ENCODE measurements at regions of chr2 and their contacts with region 1.

Region 1: GRCh38 chr2:218269899-218270720 is at the starts of genes AAMP and PNKD:
- DNase-seq: peak; percentile 100
- H3K4me3 ChIP-seq: peak within 1 kb of the TSS; percentile 91
- H3K27ac ChIP-seq: peak within 1 kb of the TSS; percentile 74
- H3K4me1 ChIP-seq: peaks cover 20% of the 10 kb centered on the region
- H3K27me3 ChIP-seq: no peaks in the 10 kb centered on the region
- CTCF ChIP-seq: 0 out of 2 replicates have a peak, but pooled peaks have one; percentile 18
- total RNA-seq, gene AAMP: 74.7 and 78.8 TPM in 2 replicates
- total RNA-seq, gene PNKD: 36.7 and 44.9 TPM in 2 replicates

Region 2: DNA sequence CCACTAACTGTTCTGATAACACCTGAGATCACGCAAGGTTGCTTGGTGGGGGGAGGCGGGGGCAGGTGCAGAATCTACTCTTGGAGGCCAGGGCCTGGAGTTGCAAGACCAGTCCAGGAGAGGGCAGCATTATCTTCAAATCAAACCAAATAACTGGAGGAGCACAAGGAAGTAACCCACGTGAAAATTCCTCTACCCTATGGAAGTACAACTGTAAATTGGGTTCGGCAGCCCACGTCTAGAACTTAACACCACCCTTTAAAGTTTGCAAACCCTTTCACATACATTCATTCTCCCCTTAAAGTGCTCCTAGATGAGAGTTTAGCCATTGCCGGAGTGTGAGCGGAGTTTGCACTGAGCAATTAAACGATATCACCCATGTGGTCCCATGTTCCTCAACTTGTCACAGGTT is 83.7 kb before region 1 on chr2:
- CTCF ChIA-PET with region 1: no interaction called
- POLR2A ChIA-PET with region 1: no interaction called
- intact Hi-C with region 1: loop called (anchors 5 kb)
- DNase-seq: peak; percentile 81
- H3K4me3 ChIP-seq: no peak overlapping the region
- H3K27ac ChIP-seq: no peak overlapping the region
- H3K4me1 ChIP-seq: no peaks in the 10 kb centered on the region
- H3K27me3 ChIP-seq: no peaks in the 10 kb centered on the region
- CTCF ChIP-seq: peak; percentile 87

Region 3: GRCh38 chr2:218360447-218360846 is 90.3 kb after region 1 on chr2:
- CTCF ChIA-PET with region 1: interaction called, 3 read pairs
- POLR2A ChIA-PET with region 1: no interaction called
- intact Hi-C with region 1: loop called (anchors 1 kb)
- DNase-seq: no peak
- H3K4me3 ChIP-seq: no peak overlapping the region
- H3K27ac ChIP-seq: no peak overlapping the region
- H3K4me1 ChIP-seq: no peaks in the 10 kb centered on the region
- H3K27me3 ChIP-seq: no peaks in the 10 kb centered on the region
- CTCF ChIP-seq: no peak

Region 4: GRCh38 chr2:218395797-218396687 is 125.9 kb after region 1 on chr2:
- CTCF ChIA-PET with region 1: interaction called, 4 read pairs
- POLR2A ChIA-PET with region 1: no interaction called
- intact Hi-C with region 1: loop called (anchors 2 kb)
- DNase-seq: peak; percentile 98
- H3K4me3 ChIP-seq: peak overlapping the region; percentile 97
- H3K27ac ChIP-seq: peak overlapping the region; percentile 91
- H3K4me1 ChIP-seq: peaks cover 37% of the 10 kb centered on the region
- H3K27me3 ChIP-seq: no peaks in the 10 kb centered on the region
- CTCF ChIP-seq: peak; percentile 87

Region 5: GRCh38 chr2:218471982-218472381 is 201.9 kb after region 1 on chr2:
- CTCF ChIA-PET with region 1: no interaction called
- POLR2A ChIA-PET with region 1: no interaction called
- intact Hi-C with region 1: no loop called
- DNase-seq: no peak
- H3K4me3 ChIP-seq: no peak overlapping the region
- H3K27ac ChIP-seq: no peak overlapping the region
- H3K4me1 ChIP-seq: no peaks in the 10 kb centered on the region
- H3K27me3 ChIP-seq: no peaks in the 10 kb centered on the region
- CTCF ChIP-seq: no peak

Region 6: GRCh38 chr2:218648088-218648786 is 378.1 kb after region 1 on chr2:
- CTCF ChIA-PET with region 1: no interaction called
- POLR2A ChIA-PET with region 1: no interaction called
- intact Hi-C with region 1: loop called (anchors 1 kb)
- DNase-seq: peak; percentile 72
- H3K4me3 ChIP-seq: no peak overlapping the region
- H3K27ac ChIP-seq: no peak overlapping the region
- H3K4me1 ChIP-seq: no peaks in the 10 kb centered on the region
- H3K27me3 ChIP-seq: no peaks in the 10 kb centered on the region
- CTCF ChIP-seq: peak; percentile 93

Measured in A673 (cell line).